ENCODE measurements at regions of chr12 and their contacts with region 1.

Region 1: GRCh38 chr12:51911788-51912711 is 4.7 kb downstream of the ACVRL1 start:
- DNase-seq: no peak
- ATAC-seq: no peak
- H3K4me3 ChIP-seq: no peak overlapping the region
- H3K4me3 Mint-ChIP-seq: no peak overlapping the region
- H3K27ac ChIP-seq: no peak overlapping the region
- H3K27ac Mint-ChIP-seq: no peak overlapping the region
- H3K4me1 ChIP-seq: peaks cover 0 to 9% of the 10 kb centered on the region in 2 donors
- H3K4me1 Mint-ChIP-seq: peaks cover 4% of the 10 kb centered on the region
- H3K27me3 ChIP-seq: peaks cover 0 to 16% (median 9%) of the 10 kb centered on the region in 4 experiments
- H3K27me3 Mint-ChIP-seq: peaks cover 33% of the 10 kb centered on the region
- CTCF ChIP-seq: no peak

Region 2: GRCh38 chr12:51923501-51924271 is 11.6 kb after region 1 on chr12:
- CTCF ChIA-PET with region 1: interaction called, 17 read pairs
- POLR2A ChIA-PET with region 1: interaction called, 3 read pairs
- intact Hi-C with region 1: no loop called
- DNase-seq: peak; percentile 64
- ATAC-seq: peak; percentile 61
- H3K4me3 ChIP-seq: peak overlapping the region in 3 of 5 experiments; percentile 10 to 40 (median 12)
- H3K4me3 Mint-ChIP-seq: peak overlapping the region; percentile 65
- H3K27ac ChIP-seq: no peak overlapping the region
- H3K27ac Mint-ChIP-seq: peak overlapping the region; percentile 46
- H3K4me1 ChIP-seq: peaks cover 23 to 31% of the 10 kb centered on the region in 2 donors
- H3K4me1 Mint-ChIP-seq: peaks cover 33% of the 10 kb centered on the region
- H3K27me3 ChIP-seq: peaks cover 0 to 4% (median 2%) of the 10 kb centered on the region in 4 experiments
- H3K27me3 Mint-ChIP-seq: peaks cover 3% of the 10 kb centered on the region
- CTCF ChIP-seq: peak; percentile 75